Activated CD4-positive, alpha-beta memory T cell treated with anti-CD3 and anti-CD28 coated beads for 36 hours (primary cell): ENCODE measurements at regions of chr19 and their contacts with region 1.

Region 1: GRCh38 chr19:46954993-46955812 is 64.4 kb upstream of the NPAS1 start:
- DNase-seq: peak; percentile 46
- H3K4me3 Mint-ChIP-seq: peak overlapping the region; percentile 75
- H3K27ac Mint-ChIP-seq: peak overlapping the region; percentile 82
- H3K4me1 Mint-ChIP-seq: peaks cover 79% of the 10 kb centered on the region
- H3K27me3 Mint-ChIP-seq: no peaks in the 10 kb centered on the region

Region 2: GRCh38 chr19:46860125-46860845 is 94.9 kb before region 1 on chr19:
- CTCF ChIA-PET with region 1: interaction called, 6 read pairs
- POLR2A ChIA-PET with region 1: interaction called, 5 read pairs
- intact Hi-C with region 1: loop called (anchors 2 kb)
- DNase-seq: peak; percentile 98
- H3K4me3 Mint-ChIP-seq: peak overlapping the region; percentile 85
- H3K27ac Mint-ChIP-seq: peak overlapping the region; percentile 91
- H3K4me1 Mint-ChIP-seq: peaks cover 17% of the 10 kb centered on the region
- H3K27me3 Mint-ChIP-seq: no peaks in the 10 kb centered on the region

Region 3: GRCh38 chr19:46919324-46919723 is 35.9 kb before region 1 on chr19:
- CTCF ChIA-PET with region 1: interaction called, 3 read pairs
- POLR2A ChIA-PET with region 1: interaction called, 3 read pairs
- intact Hi-C with region 1: loop called (anchors 5 kb)
- DNase-seq: peak; percentile 53
- H3K4me3 Mint-ChIP-seq: no peak overlapping the region
- H3K27ac Mint-ChIP-seq: no peak overlapping the region
- H3K4me1 Mint-ChIP-seq: peaks cover 50% of the 10 kb centered on the region
- H3K27me3 Mint-ChIP-seq: no peaks in the 10 kb centered on the region

Region 4: GRCh38 chr19:46967578-46968027 is 12.4 kb after region 1 on chr19:
- CTCF ChIA-PET with region 1: no interaction called
- POLR2A ChIA-PET with region 1: interaction called, 4 read pairs
- intact Hi-C with region 1: loop called (anchors 2 kb)
- DNase-seq: peak; percentile 57
- H3K4me3 Mint-ChIP-seq: peak overlapping the region; percentile 35
- H3K27ac Mint-ChIP-seq: peak overlapping the region; percentile 78
- H3K4me1 Mint-ChIP-seq: peaks cover 28% of the 10 kb centered on the region
- H3K27me3 Mint-ChIP-seq: no peaks in the 10 kb centered on the region

Region 5: GRCh38 chr19:47013041-47013517 is 57.9 kb after region 1 on chr19:
- CTCF ChIA-PET with region 1: interaction called, 12 read pairs
- POLR2A ChIA-PET with region 1: no interaction called
- intact Hi-C with region 1: no loop called
- DNase-seq: peak; percentile 77
- H3K4me3 Mint-ChIP-seq: no peak overlapping the region
- H3K27ac Mint-ChIP-seq: no peak overlapping the region
- H3K4me1 Mint-ChIP-seq: peaks cover 10% of the 10 kb centered on the region
- H3K27me3 Mint-ChIP-seq: peaks cover 4% of the 10 kb centered on the region

Region 6: DNA sequence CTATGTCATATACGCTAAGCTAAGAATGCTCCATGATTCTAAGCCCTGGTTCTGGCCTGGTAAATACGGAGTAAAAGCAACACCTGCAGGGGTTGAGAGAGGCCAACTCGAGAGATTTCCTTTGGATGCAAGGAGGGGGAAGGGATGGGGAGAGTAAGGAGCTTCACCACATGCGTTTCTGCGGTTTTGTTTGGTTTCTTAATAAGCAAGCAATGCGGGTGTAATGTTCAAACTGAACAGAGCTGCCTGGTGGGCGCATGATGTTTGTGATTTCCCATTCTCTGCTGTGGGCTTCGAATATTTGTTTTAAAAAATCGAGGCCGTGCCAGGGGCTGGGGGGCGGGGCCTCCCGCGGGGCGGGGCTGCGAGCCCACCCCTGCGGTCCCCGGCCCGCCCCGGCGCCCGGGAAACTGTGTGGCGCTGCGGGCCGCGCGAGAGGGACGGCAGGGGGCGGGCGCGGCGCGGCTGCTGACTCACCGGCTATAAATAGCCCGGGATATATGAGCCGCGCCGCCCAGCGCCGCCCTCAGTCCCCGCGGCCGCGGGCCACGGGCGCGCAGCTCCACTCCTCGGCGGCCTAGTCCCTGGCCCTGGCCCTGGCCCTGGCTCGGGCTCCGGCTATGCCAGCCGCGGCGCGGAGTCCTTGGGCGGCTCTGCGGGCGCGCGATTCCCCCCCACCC is 270.7 kb after region 1 on chr19:
- CTCF ChIA-PET with region 1: no interaction called
- POLR2A ChIA-PET with region 1: no interaction called
- intact Hi-C with region 1: no loop called
- DNase-seq: peak; percentile 88
- H3K4me3 Mint-ChIP-seq: peak overlapping the region; percentile 77
- H3K27ac Mint-ChIP-seq: peak overlapping the region; percentile 89
- H3K4me1 Mint-ChIP-seq: peaks cover 10% of the 10 kb centered on the region
- H3K27me3 Mint-ChIP-seq: no peaks in the 10 kb centered on the region